A549 (cell line): ENCODE measurements at regions of chr10 and their contacts with region 1.

Region 1: DNA sequence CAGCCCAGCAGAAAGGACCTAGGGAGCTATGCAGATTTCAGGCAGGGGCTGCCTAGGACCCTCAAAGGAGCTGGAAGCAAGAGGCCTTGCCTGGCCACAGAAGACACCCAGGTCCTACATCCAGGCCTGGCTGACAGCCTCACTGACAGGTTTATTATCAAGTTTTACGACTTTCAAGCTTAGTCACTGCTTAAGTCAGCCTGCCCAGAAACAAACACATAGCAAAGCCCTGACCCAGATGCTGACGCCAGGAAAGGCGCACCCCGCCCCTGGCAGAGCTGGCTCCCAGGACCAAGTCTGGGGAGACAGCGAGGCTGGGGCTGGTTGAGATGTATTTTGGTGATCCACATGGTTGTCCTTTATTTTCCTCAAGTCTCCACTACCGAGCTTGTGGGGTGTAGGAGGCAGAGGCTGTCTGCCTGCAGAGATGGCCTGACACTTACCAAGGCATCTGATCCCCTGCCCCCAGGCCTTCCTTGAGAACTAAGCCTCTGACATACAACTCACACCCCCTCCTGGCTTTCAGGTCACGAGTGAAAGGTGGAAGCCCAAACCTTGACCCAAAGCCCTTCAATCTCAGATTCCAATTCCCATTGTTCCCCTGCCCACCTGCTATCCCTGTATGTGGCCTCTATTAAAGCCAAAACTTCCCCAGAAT is 80.7 kb upstream of the EMX2 start:
- DNase-seq: peak; percentile 62 to 77
- ATAC-seq: peak; percentile 91 to 94
- H3K4me3 ChIP-seq: no peak overlapping the region
- H3K27ac ChIP-seq: peak overlapping the region in 1 of 2 experiments; percentile 82; a peak in 3 of 6 replicates
- H3K4me1 ChIP-seq: peaks cover 32% of the 10 kb centered on the region
- CTCF ChIP-seq: no peak
- EP300 ChIP-seq: no peak
- POLR2A ChIP-seq: no peak
- RAD21 ChIP-seq: no peak

Region 2: GRCh38 chr10:117449636-117450035 is 12.3 kb before region 1 on chr10:
- CTCF ChIA-PET with region 1: interaction called, 19 read pairs
- POLR2A ChIA-PET with region 1: no interaction called
- DNase-seq: peak in 1 of 2 experiments; percentile 30
- ATAC-seq: peak in 1 of 2 experiments; percentile 63; a peak in 3 of 6 replicates
- H3K4me3 ChIP-seq: no peak overlapping the region
- H3K27ac ChIP-seq: no peak overlapping the region
- H3K4me1 ChIP-seq: no peaks in the 10 kb centered on the region
- CTCF ChIP-seq: peak; percentile 29; the same call in 2 of the 3 replicates
- EP300 ChIP-seq: no peak
- POLR2A ChIP-seq: no peak
- RAD21 ChIP-seq: peak; percentile 35 to 43; a peak in 2 of 5 replicates